ENCODE measurements at regions of chr12 and their contacts with region 1.

Region 1: DNA sequence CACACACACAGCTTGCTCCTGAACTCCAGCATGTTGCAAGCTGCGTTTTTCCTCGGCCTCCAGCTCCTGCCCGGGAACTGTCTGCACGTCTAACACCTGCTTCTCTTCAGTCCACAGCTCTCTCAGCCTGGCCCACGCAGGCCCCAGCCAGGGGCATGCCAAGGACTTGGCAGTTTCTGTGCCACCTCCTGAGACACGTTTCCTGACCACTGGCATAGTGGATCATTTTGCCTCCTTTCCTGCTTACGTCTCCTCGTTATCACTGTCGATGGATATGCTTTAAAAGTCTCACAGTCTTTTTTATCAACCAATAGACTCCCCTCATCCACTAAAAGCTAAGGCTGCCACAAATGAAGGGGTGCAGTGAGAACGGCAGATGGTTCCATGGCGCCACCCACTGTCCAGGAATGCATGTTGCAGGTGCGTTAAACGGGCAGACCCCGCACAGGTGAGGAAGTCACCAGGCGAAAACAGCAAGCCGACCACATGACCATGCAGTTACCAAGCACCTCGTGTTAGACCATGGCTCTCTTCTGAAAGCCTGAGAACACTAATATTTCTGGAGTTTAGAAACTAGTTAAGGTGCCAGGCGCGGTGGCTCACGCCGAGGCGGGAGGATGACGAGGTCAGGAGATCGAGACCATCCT is 14.7 kb upstream of the TEAD4 start:
- DNase-seq: peak; percentile 12 to 57 (median 48)
- ATAC-seq: peak; percentile 79
- H3K4me3 ChIP-seq: no peak overlapping the region
- H3K4me3 Mint-ChIP-seq: no peak overlapping the region
- H3K27ac ChIP-seq: no peak overlapping the region
- H3K27ac Mint-ChIP-seq: no peak overlapping the region
- H3K4me1 ChIP-seq: no peaks in the 10 kb centered on the region
- H3K4me1 Mint-ChIP-seq: peaks cover 2% of the 10 kb centered on the region
- H3K27me3 ChIP-seq: no peaks in the 10 kb centered on the region
- H3K27me3 Mint-ChIP-seq: peaks cover 8% of the 10 kb centered on the region
- CTCF ChIP-seq: peak; percentile 65

Region 2: DNA sequence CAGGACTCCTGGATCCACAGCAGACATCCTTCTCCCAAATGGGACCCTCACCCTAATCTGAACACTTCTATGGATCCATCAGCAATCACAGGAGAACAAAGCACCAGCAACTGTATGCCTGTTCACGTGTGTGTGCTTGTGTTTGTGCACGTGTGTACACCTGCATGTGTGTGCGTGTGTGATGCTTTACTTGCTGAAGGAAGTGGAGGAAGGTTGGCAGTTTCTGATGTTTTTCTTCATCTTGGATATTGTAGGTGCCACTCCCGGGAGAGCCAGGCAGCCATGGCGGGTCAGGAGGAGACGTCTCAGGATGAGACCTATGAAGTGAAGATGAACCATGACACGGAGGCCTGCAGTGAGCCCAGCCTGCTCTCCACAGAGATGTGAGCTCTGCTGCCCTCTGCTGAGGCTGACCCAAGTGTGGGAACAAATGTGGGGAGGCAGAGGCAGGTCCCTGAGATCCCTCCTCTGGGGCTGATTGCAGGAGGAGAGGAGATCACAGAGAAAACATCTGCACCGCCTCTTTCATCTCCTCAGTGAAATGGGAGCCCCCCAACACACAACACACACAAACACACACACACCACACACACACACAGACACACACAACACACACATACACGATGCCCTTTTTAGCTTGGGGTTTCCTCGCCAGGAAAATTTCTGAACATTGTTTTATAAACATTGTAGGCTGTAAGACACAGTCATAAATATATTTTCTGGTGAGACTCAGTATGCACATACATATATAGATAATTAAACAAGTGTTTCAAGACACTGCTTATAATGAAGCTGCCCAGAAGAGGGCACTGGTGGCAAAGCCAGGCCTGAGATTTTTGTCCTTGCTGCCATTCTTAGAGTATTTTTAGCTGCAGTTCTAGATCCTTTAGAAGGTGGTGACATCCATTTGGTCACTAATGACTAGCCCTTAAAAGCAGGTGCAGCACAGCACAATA is 261.9 kb before region 1 on chr12:
- CTCF ChIA-PET with region 1: interaction called, 4 read pairs
- POLR2A ChIA-PET with region 1: no interaction called
- intact Hi-C with region 1: loop called in 1 of 2 experiments (anchors 5 kb)
- DNase-seq: peak in 6 of 9 experiments; percentile 33 to 72 (median 50)
- ATAC-seq: peak; percentile 79
- H3K4me3 ChIP-seq: no peak overlapping the region
- H3K4me3 Mint-ChIP-seq: no peak overlapping the region
- H3K27ac ChIP-seq: no peak overlapping the region
- H3K27ac Mint-ChIP-seq: peak overlapping the region; percentile 66
- H3K4me1 ChIP-seq: no peaks in the 10 kb centered on the region
- H3K4me1 Mint-ChIP-seq: peaks cover 7% of the 10 kb centered on the region
- H3K27me3 ChIP-seq: no peaks in the 10 kb centered on the region
- H3K27me3 Mint-ChIP-seq: no peaks in the 10 kb centered on the region
- CTCF ChIP-seq: peak; percentile 77

Region 3: DNA sequence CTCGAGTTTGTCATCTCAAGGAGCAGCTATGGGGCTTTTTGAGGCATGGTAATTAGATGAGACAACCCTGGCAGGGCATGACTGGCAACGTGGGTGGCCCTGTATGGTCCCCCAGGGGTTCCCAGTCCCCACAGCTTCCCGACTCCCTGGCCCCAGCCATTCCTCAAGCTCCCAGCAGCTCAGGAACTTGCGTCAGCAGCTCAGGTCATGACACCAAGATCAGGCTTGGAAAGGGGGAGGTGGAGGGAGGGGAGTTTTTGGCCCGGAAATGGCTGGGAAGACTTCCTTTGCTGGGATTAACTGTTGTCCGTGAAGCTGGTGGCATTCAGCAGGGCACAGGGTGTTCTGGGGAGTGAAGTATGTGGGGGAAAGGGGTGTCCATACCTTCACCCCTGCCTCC is 99.2 kb before region 1 on chr12:
- CTCF ChIA-PET with region 1: interaction called, 11 read pairs
- POLR2A ChIA-PET with region 1: no interaction called
- intact Hi-C with region 1: loop called in 1 of 2 experiments (anchors 5 kb)
- DNase-seq: no peak
- ATAC-seq: no peak
- H3K4me3 ChIP-seq: no peak overlapping the region
- H3K4me3 Mint-ChIP-seq: no peak overlapping the region
- H3K27ac ChIP-seq: no peak overlapping the region
- H3K27ac Mint-ChIP-seq: no peak overlapping the region
- H3K4me1 ChIP-seq: no peaks in the 10 kb centered on the region
- H3K4me1 Mint-ChIP-seq: peaks cover 4% of the 10 kb centered on the region
- H3K27me3 ChIP-seq: no peaks in the 10 kb centered on the region
- H3K27me3 Mint-ChIP-seq: no peaks in the 10 kb centered on the region
- CTCF ChIP-seq: no peak

Region 4: DNA sequence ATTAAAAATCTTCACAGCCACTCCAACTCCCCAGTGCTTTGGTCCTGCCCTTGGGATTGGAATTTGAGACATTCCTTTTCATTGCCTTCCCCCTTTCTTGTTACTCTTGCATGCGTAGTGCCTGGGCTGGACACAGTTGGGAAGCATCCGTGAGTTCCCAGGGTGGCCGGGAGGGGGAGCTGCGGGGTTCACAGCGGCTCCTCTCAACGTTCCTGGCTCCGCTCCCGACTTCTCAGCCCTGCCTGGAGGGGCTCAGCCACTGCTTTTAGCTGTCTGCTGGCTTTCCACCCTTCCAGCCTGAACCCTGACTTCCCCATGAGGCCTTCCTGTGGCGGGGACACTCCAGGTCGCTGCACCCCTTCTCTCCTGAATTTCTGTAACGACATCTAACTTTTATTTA is 90.9 kb before region 1 on chr12:
- CTCF ChIA-PET with region 1: interaction called, 6 read pairs
- POLR2A ChIA-PET with region 1: no interaction called
- intact Hi-C with region 1: loop called in 1 of 2 experiments (anchors 5 kb)
- DNase-seq: peak in 6 of 9 experiments; percentile 20 to 55 (median 42)
- ATAC-seq: peak; percentile 56
- H3K4me3 ChIP-seq: no peak overlapping the region
- H3K4me3 Mint-ChIP-seq: no peak overlapping the region
- H3K27ac ChIP-seq: no peak overlapping the region
- H3K27ac Mint-ChIP-seq: no peak overlapping the region
- H3K4me1 ChIP-seq: no peaks in the 10 kb centered on the region
- H3K4me1 Mint-ChIP-seq: peaks cover 2% of the 10 kb centered on the region
- H3K27me3 ChIP-seq: no peaks in the 10 kb centered on the region
- H3K27me3 Mint-ChIP-seq: no peaks in the 10 kb centered on the region
- CTCF ChIP-seq: peak; percentile 57

Region 5: DNA sequence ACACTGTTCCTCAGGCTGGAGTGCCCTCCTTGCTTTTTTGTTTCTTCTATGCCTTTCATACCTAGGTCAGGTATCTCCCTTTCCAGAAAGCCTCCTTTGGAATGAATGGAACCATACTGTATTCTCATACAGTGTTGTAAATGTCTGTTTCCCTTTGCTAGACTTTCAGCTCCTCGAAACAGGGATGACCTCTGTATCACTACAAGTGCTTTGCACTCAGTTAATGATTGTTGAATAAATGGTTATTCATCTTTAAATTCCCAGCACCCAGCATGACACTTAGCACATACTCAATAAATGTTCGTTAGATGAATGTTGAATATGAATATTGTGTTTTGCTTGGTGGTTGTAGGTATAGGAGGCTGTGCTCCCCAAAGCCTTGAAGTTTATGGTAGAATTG is 59.7 kb before region 1 on chr12:
- CTCF ChIA-PET with region 1: interaction called, 4 read pairs
- POLR2A ChIA-PET with region 1: no interaction called
- intact Hi-C with region 1: loop called in 1 of 2 experiments (anchors 2 kb)
- DNase-seq: no peak
- ATAC-seq: no peak
- H3K4me3 ChIP-seq: no peak overlapping the region
- H3K4me3 Mint-ChIP-seq: no peak overlapping the region
- H3K27ac ChIP-seq: no peak overlapping the region
- H3K27ac Mint-ChIP-seq: no peak overlapping the region
- H3K4me1 ChIP-seq: peaks cover under 1% of the 10 kb centered on the region
- H3K4me1 Mint-ChIP-seq: peaks cover 24% of the 10 kb centered on the region
- H3K27me3 ChIP-seq: no peaks in the 10 kb centered on the region
- H3K27me3 Mint-ChIP-seq: no peaks in the 10 kb centered on the region
- CTCF ChIP-seq: no peak